ENCODE measurements at regions of chr20 and their contacts with region 1.

Region 1: GRCh38 chr20:11646359-11646758 is 271.3 kb upstream of the BTBD3 start:
- DNase-seq: no peak
- H3K4me3 ChIP-seq: no peak overlapping the region
- H3K27ac ChIP-seq: no peak overlapping the region
- H3K4me1 ChIP-seq: no peaks in the 10 kb centered on the region
- H3K27me3 ChIP-seq: no peaks in the 10 kb centered on the region
- CTCF ChIP-seq: no peak

Region 2: GRCh38 chr20:10022625-10023024 is 1623.7 kb before region 1 on chr20:
- CTCF ChIA-PET with region 1: interaction called, 16 read pairs
- dilution Hi-C with region 1: no loop called
- in situ Hi-C with region 1: no loop called
- intact Hi-C with region 1: no loop called
- DNase-seq: no peak
- H3K4me3 ChIP-seq: no peak overlapping the region
- H3K27ac ChIP-seq: no peak overlapping the region
- H3K4me1 ChIP-seq: no peaks in the 10 kb centered on the region
- H3K27me3 ChIP-seq: no peaks in the 10 kb centered on the region
- CTCF ChIP-seq: no peak

Region 3: GRCh38 chr20:11585752-11586352 is 60.5 kb before region 1 on chr20:
- CTCF ChIA-PET with region 1: no interaction called
- dilution Hi-C with region 1: no loop called
- in situ Hi-C with region 1: loop called in 1 of 2 experiments (anchors 10 kb)
- intact Hi-C with region 1: no loop called
- DNase-seq: peak; percentile 24
- H3K4me3 ChIP-seq: no peak overlapping the region
- H3K27ac ChIP-seq: no peak overlapping the region
- H3K4me1 ChIP-seq: peaks cover 3% of the 10 kb centered on the region
- H3K27me3 ChIP-seq: no peaks in the 10 kb centered on the region
- CTCF ChIP-seq: peak; percentile 42 to 58